PC-3 (cell line): ENCODE measurements at regions of chr6 and their contacts with region 1.

Region 1: GRCh38 chr6:136086686-136087085 is 163.4 kb downstream of the MTFR2 start:
- DNase-seq: no peak
- ATAC-seq: no peak
- H3K4me3 ChIP-seq: no peak overlapping the region
- H3K27ac ChIP-seq: peak overlapping the region; percentile 67
- H3K4me1 ChIP-seq: peaks cover 51% of the 10 kb centered on the region
- H3K27me3 ChIP-seq: no peaks in the 10 kb centered on the region
- CTCF ChIP-seq: no peak

Region 2: DNA sequence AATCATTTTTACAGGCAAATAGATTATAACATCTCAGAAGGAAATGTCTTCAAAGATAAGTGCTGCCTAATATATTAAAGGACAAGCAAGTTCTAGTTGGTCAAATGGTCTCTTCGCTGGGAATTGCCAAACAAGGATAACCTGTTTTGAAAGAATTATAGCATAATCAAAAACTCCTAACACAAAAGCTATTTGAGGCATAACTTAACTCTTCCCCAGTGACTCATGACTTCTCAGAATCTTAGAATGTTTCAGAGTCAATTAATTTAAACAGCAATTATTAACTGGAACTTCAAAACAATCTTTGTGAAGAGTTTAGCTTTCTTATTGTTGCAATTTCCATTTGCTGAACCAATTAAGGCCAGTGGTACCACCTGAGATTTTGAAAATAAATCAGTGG is 36.8 kb after region 1 on chr6:
- CTCF ChIA-PET with region 1: no interaction called
- POLR2A ChIA-PET with region 1: no interaction called
- intact Hi-C with region 1: loop called (anchors 5 kb)
- DNase-seq: peak; percentile 60
- ATAC-seq: no peak
- H3K4me3 ChIP-seq: no peak overlapping the region
- H3K27ac ChIP-seq: no peak overlapping the region
- H3K4me1 ChIP-seq: peaks cover 10% of the 10 kb centered on the region; the same call in 1 of the 2 replicates
- H3K27me3 ChIP-seq: no peaks in the 10 kb centered on the region
- CTCF ChIP-seq: no peak

Region 3: DNA sequence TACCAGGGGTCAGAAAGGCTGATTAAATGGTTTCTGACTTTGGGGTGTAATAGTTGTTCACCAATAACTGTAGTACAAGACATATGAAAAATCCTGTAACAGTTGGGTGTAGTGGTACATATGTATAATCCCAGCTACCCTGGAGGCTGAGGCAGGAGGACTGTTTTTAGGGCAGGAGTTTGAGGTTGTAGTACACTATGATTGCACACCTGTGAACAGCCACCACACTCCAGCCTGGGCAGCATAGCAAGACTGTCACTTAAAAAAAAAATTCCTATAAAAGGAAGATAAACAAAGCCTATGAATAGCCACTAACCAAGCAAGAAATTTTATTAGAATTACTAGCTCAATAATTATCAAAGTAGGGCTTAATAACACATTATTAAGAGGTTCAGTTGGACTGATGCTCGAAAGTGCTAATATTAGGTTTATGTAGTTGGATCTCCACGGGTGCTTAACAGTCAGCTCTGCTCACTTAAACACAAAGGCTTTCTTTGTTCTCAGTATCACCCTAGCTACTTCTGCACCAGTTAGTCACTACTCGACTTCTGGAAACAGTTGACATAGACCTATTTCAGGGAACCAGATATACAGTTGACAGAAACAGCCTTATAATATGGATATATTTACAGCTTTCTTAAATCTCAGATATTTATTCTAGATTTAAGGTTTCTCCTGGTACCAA is 50.5 kb after region 1 on chr6:
- CTCF ChIA-PET with region 1: no interaction called
- POLR2A ChIA-PET with region 1: no interaction called
- intact Hi-C with region 1: loop called (anchors 5 kb)
- DNase-seq: peak; percentile 32
- ATAC-seq: peak; percentile 95
- H3K4me3 ChIP-seq: no peak overlapping the region
- H3K27ac ChIP-seq: no peak overlapping the region
- H3K4me1 ChIP-seq: no peaks in the 10 kb centered on the region
- H3K27me3 ChIP-seq: no peaks in the 10 kb centered on the region
- CTCF ChIP-seq: no peak

Region 4: GRCh38 chr6:136201732-136202131 is 115.0 kb after region 1 on chr6:
- CTCF ChIA-PET with region 1: no interaction called
- POLR2A ChIA-PET with region 1: no interaction called
- intact Hi-C with region 1: loop called (anchors 2 kb)
- DNase-seq: peak; percentile 5
- ATAC-seq: peak; percentile 63
- H3K4me3 ChIP-seq: no peak overlapping the region
- H3K27ac ChIP-seq: no peak overlapping the region
- H3K4me1 ChIP-seq: no peaks in the 10 kb centered on the region
- H3K27me3 ChIP-seq: no peaks in the 10 kb centered on the region
- CTCF ChIP-seq: peak; percentile 28; the same call in 1 of the 2 replicates